AG04449 (cell line): ENCODE measurements at regions of chr9 and their contacts with region 1.

Region 1: GRCh38 chr9:15135164-15135792 is 171.7 kb downstream of the TTC39B start:
- DNase-seq: no peak
- H3K4me3 ChIP-seq: peak overlapping the region; percentile 52
- CTCF ChIP-seq: peak; percentile 84

Region 2: DNA sequence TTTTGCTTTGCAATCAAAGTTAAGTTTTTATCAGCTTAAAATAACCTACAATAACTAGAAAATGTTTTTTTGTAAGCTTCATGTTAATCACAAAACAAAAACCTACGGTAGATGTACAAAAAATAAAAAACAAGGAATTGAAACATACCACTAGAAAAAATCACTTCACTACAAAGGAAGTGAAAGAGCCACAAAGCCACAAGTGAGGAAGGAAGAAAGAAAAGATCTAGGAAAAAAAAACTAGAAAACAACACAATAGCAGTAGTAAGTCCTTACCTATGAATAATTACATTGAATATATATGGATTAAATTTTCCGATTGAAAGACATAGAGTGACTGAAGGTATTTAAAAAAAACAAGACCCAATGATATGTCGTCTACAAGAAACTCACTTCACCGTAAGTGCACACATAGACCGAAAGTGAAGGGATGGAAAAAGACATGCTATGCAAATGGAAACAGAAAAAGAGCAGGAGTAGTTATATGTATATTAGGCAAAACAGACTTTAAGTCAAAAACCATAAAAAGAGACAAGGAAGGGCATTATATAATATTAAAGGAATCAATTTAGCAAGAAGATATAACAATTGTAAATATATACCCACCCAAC is 428.6 kb before region 1 on chr9:
- CTCF ChIA-PET with region 1: no interaction called
- POLR2A ChIA-PET with region 1: no interaction called
- DNase-seq: no peak
- H3K4me3 ChIP-seq: no peak overlapping the region
- CTCF ChIP-seq: no peak

Region 3: GRCh38 chr9:15104826-15105420 is 30.4 kb before region 1 on chr9:
- CTCF ChIA-PET with region 1: interaction called, 58 read pairs
- POLR2A ChIA-PET with region 1: no interaction called
- DNase-seq: no peak
- H3K4me3 ChIP-seq: no peak overlapping the region
- CTCF ChIP-seq: peak; percentile 71

Region 4: DNA sequence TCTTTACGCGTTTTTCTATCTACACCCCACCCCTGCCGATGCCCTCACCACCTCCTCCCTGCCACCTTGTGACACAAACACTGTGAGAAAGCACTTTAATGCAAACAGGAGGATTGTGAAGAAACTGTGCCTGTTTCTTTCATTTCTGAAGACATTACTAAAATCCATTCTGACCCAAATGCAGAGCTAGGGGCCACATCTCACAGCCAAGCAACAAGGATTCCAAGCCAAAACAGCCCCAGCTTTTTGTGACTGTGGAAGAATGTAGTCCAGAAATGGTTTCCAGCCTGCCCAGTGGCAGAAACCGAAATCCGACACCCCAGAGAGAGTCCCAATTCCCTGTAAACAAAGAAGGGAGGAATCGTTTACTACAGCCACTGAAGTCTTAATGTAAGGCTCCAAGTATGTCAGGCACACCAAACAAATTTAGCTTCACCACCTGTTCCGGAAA is 19.1 kb before region 1 on chr9:
- CTCF ChIA-PET with region 1: interaction called, 21 read pairs
- POLR2A ChIA-PET with region 1: interaction called, 4 read pairs
- DNase-seq: no peak
- H3K4me3 ChIP-seq: no peak overlapping the region
- CTCF ChIP-seq: no peak

Region 5: GRCh38 chr9:15149450-15149849 is 14.2 kb after region 1 on chr9:
- CTCF ChIA-PET with region 1: interaction called, 14 read pairs
- POLR2A ChIA-PET with region 1: no interaction called
- DNase-seq: no peak
- H3K4me3 ChIP-seq: no peak overlapping the region
- CTCF ChIP-seq: no peak

Region 6: DNA sequence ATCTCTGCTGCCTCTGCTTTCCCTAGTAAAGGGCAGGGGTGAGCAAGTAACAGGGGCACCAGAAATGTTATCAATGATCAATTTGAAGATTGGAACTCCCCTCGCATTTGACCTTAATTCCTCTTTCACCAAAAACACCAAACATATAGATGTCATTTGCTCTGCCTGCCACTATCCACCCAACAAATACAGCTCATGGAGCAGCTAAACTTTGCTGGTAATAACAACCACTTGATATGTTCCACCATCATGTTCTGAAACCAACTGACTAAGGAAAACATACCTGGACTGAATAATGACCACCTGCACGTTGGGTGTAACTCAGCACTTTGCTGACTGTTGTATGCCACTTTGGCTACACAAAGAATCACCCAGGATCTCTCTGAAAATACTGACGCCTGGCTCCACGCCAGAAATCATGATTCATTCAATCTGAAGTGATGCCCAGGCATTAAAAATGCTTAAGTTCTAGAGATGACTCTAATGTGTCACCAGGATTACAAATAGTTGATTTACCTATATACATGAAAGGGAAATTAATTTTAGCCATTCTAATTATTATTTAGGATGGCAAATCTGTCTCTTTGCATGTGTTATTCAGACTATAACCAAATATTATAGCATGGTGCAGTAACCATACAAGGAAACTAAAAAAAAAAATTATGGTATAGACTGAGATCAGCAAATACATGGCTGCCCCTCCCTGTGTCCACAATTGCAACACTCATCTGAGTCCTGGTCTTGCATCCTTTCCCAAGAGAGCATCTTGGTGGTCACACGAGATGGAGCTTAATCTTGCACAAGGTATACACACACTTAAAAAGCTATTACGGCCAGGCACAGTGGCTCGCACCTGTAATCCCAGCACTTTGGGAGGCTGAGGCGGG is 214.9 kb after region 1 on chr9:
- CTCF ChIA-PET with region 1: no interaction called
- POLR2A ChIA-PET with region 1: no interaction called
- DNase-seq: no peak
- H3K4me3 ChIP-seq: no peak overlapping the region
- CTCF ChIP-seq: no peak